ENCODE measurements at regions of chrX and their contacts with region 1.

Region 1: GRCh38 chrX:119482481-119483480 is 14.5 kb downstream of the SLC25A5 start:
- DNase-seq: peak; percentile 60
- H3K4me3 Mint-ChIP-seq: peak overlapping the region; percentile 19
- H3K27ac Mint-ChIP-seq: no peak overlapping the region
- H3K4me1 Mint-ChIP-seq: peaks cover 12% of the 10 kb centered on the region
- H3K27me3 Mint-ChIP-seq: no peaks in the 10 kb centered on the region
- CTCF ChIP-seq: peak; percentile 41

Region 2: GRCh38 chrX:119389871-119390501 is 92.8 kb before region 1 on chrX:
- CTCF ChIA-PET with region 1: no interaction called
- POLR2A ChIA-PET with region 1: no interaction called
- intact Hi-C with region 1: no loop called
- DNase-seq: no peak
- H3K4me3 Mint-ChIP-seq: no peak overlapping the region
- H3K27ac Mint-ChIP-seq: no peak overlapping the region
- H3K4me1 Mint-ChIP-seq: no peaks in the 10 kb centered on the region
- H3K27me3 Mint-ChIP-seq: peaks cover 13% of the 10 kb centered on the region
- CTCF ChIP-seq: no peak

Region 3: GRCh38 chrX:119468930-119469635 is 13.7 kb before region 1 on chrX:
- CTCF ChIA-PET with region 1: interaction called, 5 read pairs
- POLR2A ChIA-PET with region 1: interaction called, 12 read pairs
- intact Hi-C with region 1: no loop called
- DNase-seq: peak; percentile 75
- H3K4me3 Mint-ChIP-seq: peak overlapping the region; percentile 81
- H3K27ac Mint-ChIP-seq: peak overlapping the region; percentile 87
- H3K4me1 Mint-ChIP-seq: no peaks in the 10 kb centered on the region
- H3K27me3 Mint-ChIP-seq: no peaks in the 10 kb centered on the region
- CTCF ChIP-seq: peak; percentile 54

Region 4: GRCh38 chrX:119495734-119496726 is 13.2 kb after region 1 on chrX:
- CTCF ChIA-PET with region 1: interaction called, 485 read pairs
- POLR2A ChIA-PET with region 1: interaction called, 6 read pairs
- intact Hi-C with region 1: no loop called
- DNase-seq: no peak
- H3K4me3 Mint-ChIP-seq: no peak overlapping the region
- H3K27ac Mint-ChIP-seq: no peak overlapping the region
- H3K4me1 Mint-ChIP-seq: peaks cover 8% of the 10 kb centered on the region
- H3K27me3 Mint-ChIP-seq: no peaks in the 10 kb centered on the region
- CTCF ChIP-seq: no peak